CD8-positive, alpha-beta memory T cell (primary cell): ENCODE measurements at regions of chr1 and their contacts with region 1.

Region 1: DNA sequence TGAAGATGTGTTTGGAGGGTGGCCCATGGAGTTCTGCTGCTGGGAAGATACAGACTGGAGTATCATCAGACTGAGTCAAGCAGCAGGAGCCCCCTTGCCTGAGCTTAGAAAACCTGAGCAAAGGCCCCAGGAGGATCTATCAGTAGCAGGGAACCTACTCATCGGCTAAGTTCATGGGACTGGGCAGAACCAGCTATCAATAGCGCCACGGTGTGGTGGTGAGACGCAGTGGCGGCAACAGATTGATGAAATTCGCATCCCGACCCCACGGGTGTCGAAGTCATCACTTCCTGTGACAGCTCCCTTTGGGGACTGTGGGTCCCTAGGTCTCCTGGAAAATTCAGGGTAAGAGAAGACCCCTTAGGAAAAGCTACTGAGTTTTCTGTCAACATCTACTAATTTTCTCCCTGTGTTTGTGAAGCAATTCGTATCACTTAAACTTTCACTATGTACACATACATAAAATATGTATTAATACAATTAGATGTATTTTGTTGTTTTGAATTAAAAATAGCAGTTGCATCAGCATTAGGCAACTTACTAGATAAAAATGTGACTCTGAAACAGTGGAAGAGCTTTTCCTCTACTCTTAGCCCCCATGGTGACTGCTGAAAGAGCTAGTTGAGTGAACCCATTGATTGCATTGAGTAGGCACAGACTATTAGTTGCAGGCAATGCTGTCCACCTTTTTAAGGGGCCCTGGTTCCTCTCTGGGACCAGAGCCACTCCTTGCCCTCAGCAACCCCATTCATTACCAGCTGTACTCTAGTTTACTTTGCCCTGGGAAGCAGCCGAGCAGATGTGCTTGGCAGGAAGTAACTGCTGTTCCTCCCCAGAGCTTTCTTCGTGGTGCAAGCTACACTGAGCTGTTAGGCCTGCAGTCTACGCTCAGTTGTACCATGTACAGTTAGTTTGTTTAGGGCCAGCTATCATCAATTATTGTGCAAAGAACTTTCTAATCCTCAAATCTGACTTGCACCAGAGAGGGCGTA is 7.3 kb upstream of the CACNA1S start:
- DNase-seq: peak; percentile 24 to 68 (median 29)
- H3K4me3 ChIP-seq: no peak overlapping the region
- H3K4me3 Mint-ChIP-seq: no peak overlapping the region
- H3K27ac ChIP-seq: no peak overlapping the region
- H3K27ac Mint-ChIP-seq: peak overlapping the region in 1 of 8 donors; percentile 22
- H3K4me1 ChIP-seq: peaks cover 9% of the 10 kb centered on the region
- H3K4me1 Mint-ChIP-seq: peaks cover 10 to 31% (median 20%) of the 10 kb centered on the region in 3 donors
- H3K27me3 ChIP-seq: peaks cover 13% of the 10 kb centered on the region
- H3K27me3 Mint-ChIP-seq: peaks cover 7 to 19% of the 10 kb centered on the region in 2 donors

Region 2: DNA sequence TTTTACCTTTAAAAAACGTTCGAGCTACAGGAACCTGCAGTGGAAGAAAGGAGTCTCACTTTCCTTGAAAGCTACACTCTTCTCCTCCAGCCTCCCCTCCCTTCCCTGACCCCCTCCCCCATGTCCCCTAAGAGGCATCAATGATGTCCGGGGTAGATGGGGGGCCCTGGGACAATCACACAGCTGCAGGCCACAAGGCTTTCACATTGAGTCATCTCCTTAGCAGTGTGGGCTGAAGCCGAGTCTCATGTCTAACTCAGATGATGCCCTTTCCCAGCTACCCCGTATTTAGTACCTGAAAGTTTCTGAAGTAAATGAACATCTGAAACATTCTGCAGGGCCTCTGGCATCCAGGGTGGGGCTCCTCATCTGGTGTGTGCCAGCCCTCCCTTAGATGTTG is 253.0 kb before region 1 on chr1:
- CTCF ChIA-PET with region 1: no interaction called
- POLR2A ChIA-PET with region 1: no interaction called
- DNase-seq: no peak
- H3K4me3 ChIP-seq: no peak overlapping the region
- H3K4me3 Mint-ChIP-seq: peak overlapping the region in 1 of 7 donors; percentile 15
- H3K27ac ChIP-seq: no peak overlapping the region
- H3K27ac Mint-ChIP-seq: peak overlapping the region in 2 of 8 donors; percentile 17 to 19
- H3K4me1 ChIP-seq: peaks cover 32% of the 10 kb centered on the region
- H3K4me1 Mint-ChIP-seq: peaks cover 65 to 74% (median 71%) of the 10 kb centered on the region in 3 donors
- H3K27me3 ChIP-seq: no peaks in the 10 kb centered on the region
- H3K27me3 Mint-ChIP-seq: no peaks in the 10 kb centered on the region

Region 3: DNA sequence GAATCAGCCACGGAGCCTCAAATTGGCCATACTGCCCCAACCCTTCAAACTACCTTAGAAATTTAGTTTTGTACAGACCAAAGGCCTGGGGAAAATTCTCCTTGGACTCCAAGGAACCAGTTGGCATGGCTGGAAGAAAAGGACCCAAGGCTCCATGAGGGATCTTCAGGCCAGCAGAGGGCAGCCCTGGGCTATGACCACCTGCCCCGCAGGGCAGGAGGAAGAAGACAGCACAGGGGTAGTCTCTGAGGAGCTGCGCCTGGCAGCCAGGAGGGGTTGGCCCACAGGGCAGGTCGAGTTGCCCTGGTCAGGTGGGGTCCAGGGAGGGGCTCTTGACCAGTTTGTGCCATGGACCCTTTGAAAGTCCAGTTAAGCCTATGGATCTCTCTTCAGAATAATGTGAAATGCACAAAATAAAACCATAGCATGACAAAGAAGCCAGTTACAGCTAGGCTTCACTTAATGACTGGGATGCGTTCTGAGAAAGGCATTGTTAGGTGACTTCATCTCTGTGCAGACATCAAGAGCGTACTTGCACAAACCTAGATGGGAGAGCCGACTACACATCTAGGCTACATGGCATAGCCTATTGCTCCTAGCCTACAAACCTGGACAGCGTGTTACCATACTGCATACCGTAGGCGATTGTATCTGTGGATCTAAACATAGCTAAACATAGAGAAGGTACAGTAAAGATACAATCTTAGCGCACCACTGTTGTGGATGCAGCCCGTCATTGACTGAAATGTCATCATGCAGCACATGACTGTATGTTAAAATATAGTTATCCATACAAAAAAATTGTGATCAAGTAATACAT is 33.4 kb before region 1 on chr1:
- CTCF ChIA-PET with region 1: interaction called, 25 read pairs
- POLR2A ChIA-PET with region 1: no interaction called
- DNase-seq: peak in 2 of 5 donors; percentile 6 to 31
- H3K4me3 ChIP-seq: no peak overlapping the region
- H3K4me3 Mint-ChIP-seq: no peak overlapping the region
- H3K27ac ChIP-seq: no peak overlapping the region
- H3K27ac Mint-ChIP-seq: no peak overlapping the region
- H3K4me1 ChIP-seq: no peaks in the 10 kb centered on the region
- H3K4me1 Mint-ChIP-seq: no peaks in the 10 kb centered on the region
- H3K27me3 ChIP-seq: peaks cover 4% of the 10 kb centered on the region
- H3K27me3 Mint-ChIP-seq: peaks cover 8 to 32% of the 10 kb centered on the region in 2 donors